ENCODE measurements at regions of chr17 and their contacts with region 1.

Region 1: DNA sequence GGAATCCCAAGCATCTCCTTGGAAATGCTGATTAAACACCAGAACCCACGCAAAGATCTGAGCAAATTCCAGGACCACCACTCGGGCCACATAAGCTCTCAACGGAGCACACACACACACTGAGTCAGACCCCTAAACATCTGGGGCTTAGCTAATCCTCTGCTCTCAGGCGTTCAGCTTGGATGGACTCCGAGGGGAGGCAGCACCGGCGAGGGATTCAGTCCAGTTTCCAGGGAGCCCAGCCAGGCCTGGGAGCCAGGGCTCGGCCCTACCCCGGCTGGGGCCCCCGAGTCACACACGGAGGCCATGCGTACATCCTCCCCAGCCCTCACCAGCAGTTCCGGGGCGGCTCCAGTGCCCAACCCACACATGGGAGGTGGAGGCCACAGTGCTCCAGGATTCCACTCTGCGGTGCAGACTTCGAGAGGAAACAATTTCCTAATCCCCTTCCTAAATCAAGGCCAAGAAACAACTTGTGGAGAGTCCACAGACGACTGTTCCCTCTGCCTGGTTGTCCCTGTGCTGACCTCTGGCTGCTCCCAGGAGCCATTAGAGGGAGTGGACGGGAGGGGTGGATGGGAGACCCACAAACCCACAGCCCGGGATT is 70.5 kb downstream of the GAS7 start:
- DNase-seq: peak; percentile 82 to 84
- ATAC-seq: peak; percentile 77 to 91 (median 84)
- H3K4me3 ChIP-seq: no peak overlapping the region
- H3K27ac ChIP-seq: peak overlapping the region; percentile 48 to 86 (median 76)
- H3K4me1 ChIP-seq: peaks cover 8 to 62% (median 37%) of the 10 kb centered on the region in 9 donors
- H3K27me3 ChIP-seq: no peaks in the 10 kb centered on the region
- CTCF ChIP-seq: peak in 1 of 9 donors; percentile 11

Region 2: DNA sequence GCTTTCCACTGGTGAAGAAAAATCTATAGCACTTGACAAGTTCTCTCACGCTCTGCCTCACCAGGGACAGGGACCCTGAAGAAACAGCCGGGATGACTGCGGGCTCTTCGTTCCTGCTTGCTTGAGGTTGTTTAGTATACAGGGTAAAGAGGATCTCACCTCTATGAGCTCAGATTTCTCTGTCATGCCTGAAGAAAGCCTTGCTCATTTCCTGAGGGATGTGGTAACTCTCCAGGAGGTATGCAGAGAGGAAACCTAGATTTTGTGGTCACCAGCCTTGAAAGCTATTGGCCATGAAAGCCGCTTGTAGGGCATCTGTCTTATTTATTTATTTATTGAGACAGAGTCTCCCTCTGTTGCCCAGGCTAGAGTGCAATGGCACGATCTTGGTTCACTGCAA is 459.4 kb before region 1 on chr17:
- intact Hi-C with region 1: no loop called
- DNase-seq: no peak
- ATAC-seq: no peak
- H3K4me3 ChIP-seq: no peak overlapping the region
- H3K27ac ChIP-seq: no peak overlapping the region
- H3K4me1 ChIP-seq: no peaks in the 10 kb centered on the region
- H3K27me3 ChIP-seq: peaks cover 0 to 28% (median 13%) of the 10 kb centered on the region in 7 donors
- CTCF ChIP-seq: no peak

Region 3: GRCh38 chr17:10036511-10037061 is 91.3 kb before region 1 on chr17:
- intact Hi-C with region 1: loop called in 1 of 10 experiments (anchors 5 kb)
- DNase-seq: peak; percentile 77 to 79
- ATAC-seq: peak; percentile 83 to 93 (median 87)
- H3K4me3 ChIP-seq: peak overlapping the region in 9 of 10 donors; percentile 30 to 56 (median 51)
- H3K27ac ChIP-seq: peak overlapping the region; percentile 65 to 91 (median 86)
- H3K4me1 ChIP-seq: peaks cover 0 to 73% (median 5%) of the 10 kb centered on the region in 9 donors
- H3K27me3 ChIP-seq: no peaks in the 10 kb centered on the region
- CTCF ChIP-seq: no peak

Region 4: DNA sequence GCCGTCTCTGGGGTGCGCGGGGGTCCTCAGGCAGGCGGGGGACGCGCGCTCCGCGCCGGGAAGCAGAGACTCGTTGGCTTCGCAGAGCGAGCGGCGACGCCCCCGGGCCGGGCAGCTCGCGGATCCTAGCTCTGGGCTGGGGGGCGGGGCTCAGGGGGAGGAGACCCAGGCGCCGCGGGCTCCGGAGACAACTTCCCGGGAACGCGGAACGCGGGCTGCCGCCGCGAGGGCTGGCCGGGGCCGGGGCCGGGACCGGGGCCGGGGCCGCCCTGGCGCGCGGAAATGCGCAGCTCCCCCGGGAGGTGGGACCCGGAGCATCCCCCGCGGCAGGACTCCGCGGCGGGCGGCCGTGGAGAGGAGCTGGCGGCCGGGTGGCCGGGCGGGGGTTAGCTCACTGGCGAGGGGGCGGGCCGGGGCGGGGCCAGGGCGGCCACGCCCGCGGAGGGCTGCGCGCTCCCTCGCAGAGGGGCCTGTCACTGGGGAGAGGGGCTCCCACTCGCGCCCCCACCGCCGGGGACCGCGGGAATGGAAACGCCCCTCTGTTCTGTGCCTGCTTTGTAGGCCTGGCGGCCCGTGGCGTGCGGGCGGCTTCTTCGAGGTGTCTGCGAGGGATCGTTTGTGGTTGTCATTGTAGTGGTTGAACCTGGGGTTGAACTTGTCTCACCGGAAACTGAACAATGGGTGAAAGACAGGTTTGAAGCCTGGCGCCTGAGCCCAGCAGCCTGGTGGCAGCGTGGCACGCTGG is 70.8 kb after region 1 on chr17 and contains the start of gene GAS7:
- intact Hi-C with region 1: loop called in 2 of 10 experiments (anchors 10 kb)
- DNase-seq: peak; percentile 74
- ATAC-seq: peak in 7 of 8 donors; percentile 62 to 91 (median 71)
- H3K4me3 ChIP-seq: peak within 1 kb of the TSS; percentile 62 to 78 (median 72)
- H3K27ac ChIP-seq: peak within 1 kb of the TSS in 8 of 10 donors; percentile 24 to 88 (median 80)
- H3K4me1 ChIP-seq: peaks cover 0 to 29% (median 11%) of the 10 kb centered on the region in 9 donors
- H3K27me3 ChIP-seq: peaks cover 0 to 26% (median 12%) of the 10 kb centered on the region in 7 donors
- CTCF ChIP-seq: no peak
- total RNA-seq, gene GAS7: 39.6 to 111 (median 67.7) TPM

Region 5: DNA sequence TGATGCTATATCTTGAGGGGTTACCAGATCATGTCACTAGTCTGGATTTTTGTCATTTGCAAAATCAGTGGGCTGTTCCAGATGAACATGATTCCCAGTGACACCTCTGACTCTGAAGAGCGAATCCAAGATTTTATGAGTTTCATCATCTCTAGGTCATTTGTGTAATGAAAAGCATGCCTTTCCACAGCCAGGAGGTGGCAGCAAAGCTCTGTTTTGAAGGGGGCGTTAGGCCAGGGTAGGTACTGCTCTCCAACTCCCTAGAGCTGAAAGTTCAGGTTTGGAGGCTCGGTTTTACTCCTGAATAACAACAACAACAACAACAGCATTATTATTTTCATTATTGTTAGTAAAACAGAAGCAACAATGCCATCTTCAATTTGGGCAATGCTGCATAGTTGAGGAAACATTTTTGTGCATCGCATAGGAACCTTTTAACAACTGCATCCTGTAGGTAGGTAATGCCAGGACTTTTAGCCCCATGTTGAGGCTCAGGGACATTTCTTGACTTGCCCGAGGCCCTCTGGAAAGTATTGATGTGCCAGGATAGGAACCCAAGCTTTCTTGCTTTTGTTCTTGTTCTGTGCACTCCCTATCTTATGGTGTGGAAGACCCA is 167.9 kb after region 1 on chr17:
- intact Hi-C with region 1: loop called in 1 of 10 experiments (anchors 5 kb)
- DNase-seq: peak; percentile 21 to 40
- ATAC-seq: peak in 5 of 8 donors; percentile 41 to 53 (median 48)
- H3K4me3 ChIP-seq: no peak overlapping the region
- H3K27ac ChIP-seq: no peak overlapping the region
- H3K4me1 ChIP-seq: peaks cover 0 to 6% (median under 1%) of the 10 kb centered on the region in 9 donors
- H3K27me3 ChIP-seq: peaks cover 0 to 14% (median 8%) of the 10 kb centered on the region in 7 donors
- CTCF ChIP-seq: peak; percentile 21 to 74 (median 64)

Measured in heart right ventricle (tissue), 16 donors.